ENCODE measurements at regions of chr1 and their contacts with region 1.

Region 1: GRCh38 chr1:171801487-171801891 is 20.0 kb downstream of the METTL13 start:
- DNase-seq: peak; percentile 51
- ATAC-seq: peak; percentile 65
- H3K4me3 ChIP-seq: no peak overlapping the region
- H3K27ac ChIP-seq: no peak overlapping the region
- H3K4me1 ChIP-seq: peaks cover 4% of the 10 kb centered on the region; the same call in 1 of the 2 replicates
- H3K27me3 ChIP-seq: no peaks in the 10 kb centered on the region
- CTCF ChIP-seq: peak; percentile 71
- POLR2A ChIP-seq: no peak
- RAD21 ChIP-seq: peak; percentile 71

Region 2: DNA sequence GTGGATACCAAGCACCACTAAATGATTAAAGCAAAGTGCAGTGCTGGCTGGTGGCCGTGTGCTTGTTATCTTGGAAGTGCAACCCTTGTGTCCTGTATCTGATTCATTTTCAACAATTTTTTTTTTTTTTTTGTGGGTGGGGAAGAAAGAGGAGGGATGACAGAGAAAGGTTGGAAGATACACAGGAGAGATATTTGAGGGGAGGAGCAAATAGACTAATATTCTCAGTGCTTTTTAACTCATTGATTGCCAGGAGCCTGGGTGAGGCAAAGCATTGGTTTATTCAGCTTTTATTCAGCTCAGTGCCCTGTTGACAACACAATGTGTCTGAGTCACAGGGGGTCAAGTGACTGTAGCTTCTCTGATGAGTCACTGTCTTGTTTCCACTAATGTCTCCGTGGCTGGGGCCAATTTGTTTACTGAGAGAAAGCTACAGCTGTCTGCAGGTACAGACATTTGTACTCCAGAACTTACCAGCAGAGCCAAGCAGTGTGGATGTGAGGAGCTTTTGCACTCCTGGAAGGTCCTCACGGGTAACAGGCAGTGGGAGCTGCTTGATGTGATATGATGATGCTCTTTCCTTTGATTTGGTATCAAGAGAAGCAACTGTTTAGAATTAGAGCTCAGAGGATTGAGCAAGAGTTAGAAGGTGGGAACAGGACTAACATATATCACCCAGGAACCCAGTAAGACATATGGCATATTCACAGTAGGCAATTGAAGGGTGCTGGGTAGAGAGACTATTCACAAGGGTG is 16.2 kb after region 1 on chr1:
- CTCF ChIA-PET with region 1: interaction called, 10 read pairs
- POLR2A ChIA-PET with region 1: no interaction called
- dilution Hi-C with region 1: no loop called
- in situ Hi-C with region 1: no loop called
- intact Hi-C with region 1: no loop called
- DNase-seq: peak; percentile 76
- ATAC-seq: peak; percentile 85
- H3K4me3 ChIP-seq: no peak overlapping the region
- H3K27ac ChIP-seq: no peak overlapping the region
- H3K4me1 ChIP-seq: peaks cover 6% of the 10 kb centered on the region
- H3K27me3 ChIP-seq: peaks cover 3% of the 10 kb centered on the region; the same call in 1 of the 2 replicates
- CTCF ChIP-seq: no peak
- POLR2A ChIP-seq: no peak
- RAD21 ChIP-seq: no peak